K562 (cell line): ENCODE measurements at regions of chr13 and their contacts with region 1.

Region 1: DNA sequence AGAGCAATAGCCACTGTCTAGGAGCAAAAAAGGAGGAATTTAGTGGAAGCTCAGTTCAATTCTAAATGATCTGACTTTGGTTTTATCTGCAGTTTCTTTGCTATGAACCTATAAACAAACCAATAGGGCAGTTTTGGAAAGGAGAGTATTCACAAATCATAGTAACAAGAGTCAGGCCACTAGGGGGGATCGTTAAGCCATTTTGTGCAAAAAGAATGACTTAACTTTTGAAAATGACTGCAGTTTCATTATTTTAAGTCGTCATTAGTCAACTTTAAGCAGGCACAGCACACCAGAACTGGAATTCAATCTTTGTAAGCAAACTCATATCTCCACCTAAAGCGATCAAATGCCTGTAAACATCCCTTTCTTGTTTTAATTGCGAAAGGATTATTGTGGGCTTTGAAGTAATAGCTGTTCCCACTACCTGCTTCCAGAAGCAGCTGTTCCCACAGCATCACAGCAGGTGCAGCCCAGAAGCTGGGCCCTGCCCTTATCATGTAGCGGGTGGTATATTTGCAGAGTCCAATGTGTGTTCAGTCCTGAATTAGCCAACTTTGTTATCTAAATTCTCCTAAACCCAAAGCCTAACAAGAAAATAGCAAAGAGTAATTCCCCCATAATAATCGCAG is 51.5 kb downstream of the SOX21 start:
- DNase-seq: peak in 3 of 4 experiments; percentile 28 to 63 (median 34)
- ATAC-seq: peak; percentile 35
- H3K4me3 ChIP-seq: no peak overlapping the region
- H3K27ac ChIP-seq: peak overlapping the region; percentile 11; the same call in 1 of the 3 replicates
- H3K4me1 ChIP-seq: peaks cover 10 to 67% of the 10 kb centered on the region in 2 experiments
- H3K27me3 ChIP-seq: no peaks in the 10 kb centered on the region
- CTCF ChIP-seq: peak; percentile 33 to 57 (median 42); a peak in 4 of 6 replicates
- EP300 ChIP-seq: no peak
- POLR2A ChIP-seq: no peak
- RAD21 ChIP-seq: peak; percentile 34 to 71; a peak in 3 of 4 replicates

Region 2: GRCh38 chr13:94620286-94620896 is 40.4 kb before region 1 on chr13:
- CTCF ChIA-PET with region 1: no interaction called
- POLR2A ChIA-PET with region 1: no interaction called
- in situ Hi-C with region 1: no loop called
- intact Hi-C with region 1: loop called (anchors 2 kb)
- DNase-seq: peak; percentile 30 to 68 (median 34)
- ATAC-seq: peak; percentile 87
- H3K4me3 ChIP-seq: no peak overlapping the region
- H3K27ac ChIP-seq: no peak overlapping the region
- H3K4me1 ChIP-seq: no peaks in the 10 kb centered on the region
- H3K27me3 ChIP-seq: no peaks in the 10 kb centered on the region
- CTCF ChIP-seq: peak; percentile 60 to 73 (median 64)
- EP300 ChIP-seq: no peak
- POLR2A ChIP-seq: no peak
- RAD21 ChIP-seq: peak; percentile 56 to 79

Region 3: GRCh38 chr13:94710881-94711560 is 50.2 kb after region 1 on chr13:
- CTCF ChIA-PET with region 1: no interaction called
- POLR2A ChIA-PET with region 1: interaction called, 3 read pairs
- in situ Hi-C with region 1: no loop called
- intact Hi-C with region 1: loop called (anchors 5 kb)
- DNase-seq: peak; percentile 21 to 62 (median 54)
- ATAC-seq: peak; percentile 81
- H3K4me3 ChIP-seq: no peak overlapping the region
- H3K27ac ChIP-seq: no peak overlapping the region
- H3K4me1 ChIP-seq: peaks cover 2 to 37% of the 10 kb centered on the region in 2 experiments; a peak in 2 of 5 replicates
- H3K27me3 ChIP-seq: peaks cover 27 to 38% of the 10 kb centered on the region in 2 experiments; a peak in 4 of 5 replicates
- CTCF ChIP-seq: peak in 2 of 3 experiments; percentile 18 to 35; a peak in 2 of 6 replicates
- EP300 ChIP-seq: no peak
- POLR2A ChIP-seq: no peak
- RAD21 ChIP-seq: peak in 1 of 2 experiments; percentile 13; a peak in 1 of 4 replicates

Region 4: GRCh38 chr13:94933230-94933751 is 272.5 kb after region 1 on chr13:
- CTCF ChIA-PET with region 1: no interaction called
- POLR2A ChIA-PET with region 1: no interaction called
- in situ Hi-C with region 1: no loop called
- intact Hi-C with region 1: loop called (anchors 5 kb)
- DNase-seq: no peak
- ATAC-seq: no peak
- H3K4me3 ChIP-seq: no peak overlapping the region
- H3K27ac ChIP-seq: no peak overlapping the region
- H3K4me1 ChIP-seq: no peaks in the 10 kb centered on the region
- H3K27me3 ChIP-seq: no peaks in the 10 kb centered on the region
- CTCF ChIP-seq: no peak
- EP300 ChIP-seq: no peak
- POLR2A ChIP-seq: no peak
- RAD21 ChIP-seq: no peak

Region 5: GRCh38 chr13:94950303-94950702 is 289.5 kb after region 1 on chr13:
- CTCF ChIA-PET with region 1: no interaction called
- POLR2A ChIA-PET with region 1: no interaction called
- in situ Hi-C with region 1: no loop called
- intact Hi-C with region 1: loop called (anchors 5 kb)
- DNase-seq: peak in 2 of 4 experiments; percentile 17 to 28
- ATAC-seq: peak; percentile 81
- H3K4me3 ChIP-seq: no peak overlapping the region
- H3K27ac ChIP-seq: no peak overlapping the region
- H3K4me1 ChIP-seq: no peaks in the 10 kb centered on the region; a peak in 1 of 5 replicates
- H3K27me3 ChIP-seq: peaks cover 0 to 12% of the 10 kb centered on the region in 2 experiments; a peak in 2 of 5 replicates
- CTCF ChIP-seq: peak in 2 of 3 experiments; percentile 43 to 50; a peak in 3 of 6 replicates
- EP300 ChIP-seq: no peak
- POLR2A ChIP-seq: no peak
- RAD21 ChIP-seq: peak; percentile 53